ENCODE measurements at regions of chr4 and their contacts with region 1.

Region 1: DNA sequence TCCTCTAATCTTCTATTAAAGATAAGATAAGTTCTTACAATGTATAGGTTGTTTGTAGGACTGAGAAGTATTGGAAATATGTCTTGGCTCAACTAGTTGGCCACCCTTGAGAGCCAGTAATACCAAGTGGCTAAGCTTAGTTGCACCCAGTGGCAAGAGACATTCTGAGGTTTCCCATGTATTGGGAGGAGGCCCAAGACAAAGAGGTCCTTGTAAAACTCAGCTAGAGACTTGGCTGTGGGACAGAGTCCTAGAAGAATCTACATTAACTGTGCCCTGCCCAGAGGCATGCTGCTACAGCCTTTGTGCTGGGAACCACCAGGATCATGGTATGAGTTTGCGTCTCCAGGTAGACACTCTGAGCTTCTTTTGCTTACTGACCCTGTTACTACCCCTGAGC is 41.9 kb upstream of the SLC4A4 start:
- DNase-seq: no peak
- H3K4me3 ChIP-seq: no peak overlapping the region
- H3K27ac ChIP-seq: no peak overlapping the region
- H3K4me1 ChIP-seq: peaks cover 0 to 18% (median 6%) of the 10 kb centered on the region in 4 donors
- H3K27me3 ChIP-seq: no peaks in the 10 kb centered on the region
- CTCF ChIP-seq: no peak
- EP300 ChIP-seq: no peak
- POLR2A ChIP-seq: no peak

Region 2: GRCh38 chr4:69617083-69617694 is 1679.8 kb before region 1 on chr4:
- in situ Hi-C with region 1: no loop called
- intact Hi-C with region 1: loop called (anchors 5 kb)
- DNase-seq: no peak
- H3K4me3 ChIP-seq: no peak overlapping the region
- H3K27ac ChIP-seq: no peak overlapping the region
- H3K4me1 ChIP-seq: no peaks in the 10 kb centered on the region
- H3K27me3 ChIP-seq: no peaks in the 10 kb centered on the region
- CTCF ChIP-seq: peak in 4 of 5 experiments; percentile 30 to 55 (median 48)
- EP300 ChIP-seq: no peak
- POLR2A ChIP-seq: no peak

Measured in transverse colon (tissue), 4 donors.